ENCODE measurements at regions of chr15 and their contacts with region 1.

Region 1: GRCh38 chr15:67065444-67066093 is at the start of gene SMAD3:
- DNase-seq: peak; percentile 91 to 92
- ATAC-seq: peak; percentile 86 to 92 (median 90)
- H3K4me3 ChIP-seq: peak within 1 kb of the TSS; percentile 73 to 96 (median 82)
- H3K27ac ChIP-seq: peak within 1 kb of the TSS; percentile 82 to 97 (median 93)
- H3K4me1 ChIP-seq: peaks cover 2 to 50% (median 38%) of the 10 kb centered on the region in 9 donors
- H3K27me3 ChIP-seq: no peaks in the 10 kb centered on the region
- CTCF ChIP-seq: peak in 1 of 9 donors; percentile 19
- total RNA-seq, gene SMAD3: 11.3 to 44.8 (median 15.7) TPM

Region 2: GRCh38 chr15:67025719-67026609 is 39.6 kb before region 1 on chr15:
- intact Hi-C with region 1: loop called in 3 of 10 experiments (anchors 5 kb)
- DNase-seq: peak; percentile 27 to 40
- ATAC-seq: peak in 7 of 8 donors; percentile 22 to 57 (median 46)
- H3K4me3 ChIP-seq: no peak overlapping the region
- H3K27ac ChIP-seq: peak overlapping the region in 9 of 10 donors; percentile 43 to 87 (median 69)
- H3K4me1 ChIP-seq: peaks cover 13 to 70% (median 45%) of the 10 kb centered on the region in 9 donors
- H3K27me3 ChIP-seq: no peaks in the 10 kb centered on the region
- CTCF ChIP-seq: no peak

Region 3: GRCh38 chr15:67109141-67110034 is 43.8 kb after region 1 on chr15:
- intact Hi-C with region 1: loop called in 3 of 10 experiments (anchors 5 kb)
- DNase-seq: peak; percentile 57 to 72
- ATAC-seq: peak; percentile 24 to 79 (median 52)
- H3K4me3 ChIP-seq: no peak overlapping the region
- H3K27ac ChIP-seq: peak overlapping the region in 8 of 10 donors; percentile 9 to 57 (median 32)
- H3K4me1 ChIP-seq: peaks cover 25 to 87% (median 59%) of the 10 kb centered on the region in 9 donors
- H3K27me3 ChIP-seq: no peaks in the 10 kb centered on the region
- CTCF ChIP-seq: no peak

Region 4: GRCh38 chr15:67127965-67128364 is 62.4 kb after region 1 on chr15:
- intact Hi-C with region 1: no loop called
- DNase-seq: no peak
- ATAC-seq: peak in 2 of 8 donors; percentile 12 to 53
- H3K4me3 ChIP-seq: no peak overlapping the region
- H3K27ac ChIP-seq: peak overlapping the region in 6 of 10 donors; percentile 4 to 85 (median 52)
- H3K4me1 ChIP-seq: peaks cover 17 to 88% (median 66%) of the 10 kb centered on the region in 9 donors
- H3K27me3 ChIP-seq: no peaks in the 10 kb centered on the region
- CTCF ChIP-seq: no peak

Region 5: DNA sequence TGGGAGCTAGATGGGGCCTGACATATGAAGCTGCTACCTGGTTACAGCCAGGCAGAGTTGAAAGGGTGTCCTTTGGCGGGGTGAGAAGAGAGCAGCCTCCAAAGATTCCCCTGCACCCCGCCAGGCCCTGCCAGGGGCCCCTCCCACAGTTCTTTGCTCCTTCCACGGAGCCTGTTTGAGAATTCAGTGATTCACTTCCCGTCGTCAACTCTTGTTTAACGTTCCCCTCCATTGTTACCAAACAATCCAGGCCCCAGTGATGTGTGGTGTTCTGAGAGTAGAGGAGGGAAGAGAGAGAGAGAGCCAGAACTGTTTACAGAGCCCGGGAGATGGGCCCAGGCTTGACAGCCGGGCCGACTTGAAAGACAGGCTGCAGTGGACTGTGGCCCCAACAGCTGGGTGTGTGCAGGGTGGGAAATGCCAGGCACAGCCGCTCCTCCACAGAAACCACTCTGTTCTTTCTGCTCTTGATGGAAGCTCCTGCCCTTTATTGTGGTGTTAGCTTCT is 81.4 kb after region 1 on chr15:
- intact Hi-C with region 1: loop called in 1 of 10 experiments (anchors 5 kb)
- DNase-seq: peak in 1 of 2 donors; percentile 62
- ATAC-seq: peak; percentile 35 to 76 (median 64)
- H3K4me3 ChIP-seq: no peak overlapping the region
- H3K27ac ChIP-seq: peak overlapping the region; percentile 14 to 87 (median 74)
- H3K4me1 ChIP-seq: peaks cover 20 to 98% (median 69%) of the 10 kb centered on the region in 9 donors
- H3K27me3 ChIP-seq: no peaks in the 10 kb centered on the region
- CTCF ChIP-seq: no peak

Region 6: DNA sequence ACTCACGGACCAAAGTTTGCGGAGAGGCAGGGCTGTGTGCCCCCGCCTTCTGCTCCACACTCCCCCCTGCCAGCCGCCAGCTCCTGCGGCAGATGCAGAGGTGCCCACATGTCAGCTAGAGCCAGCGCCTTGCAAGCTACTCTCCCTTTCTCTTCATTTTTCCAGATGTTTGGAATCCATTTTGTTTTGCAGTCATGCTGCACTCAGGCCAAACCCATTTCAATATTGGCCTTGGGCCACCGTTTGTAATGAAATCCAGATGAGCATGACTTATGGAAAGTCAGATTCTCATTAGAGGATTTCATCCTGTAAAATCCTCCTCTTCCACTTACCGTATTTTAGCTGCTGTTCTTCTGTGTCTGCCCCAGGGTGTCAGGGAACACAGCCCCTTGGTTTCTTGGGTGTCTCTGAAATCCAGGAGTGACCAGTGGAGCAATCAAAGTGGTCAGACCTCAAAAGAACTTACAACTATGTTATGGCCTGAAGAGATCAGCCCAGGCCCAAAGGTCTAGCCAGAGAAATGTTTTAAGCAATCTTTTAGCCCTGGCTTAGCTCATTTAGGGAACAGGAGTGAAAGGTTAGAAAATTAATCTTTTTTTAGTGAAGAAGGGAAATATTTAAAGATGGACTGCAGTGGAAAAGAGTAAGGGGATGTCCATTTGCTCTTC is 123.1 kb after region 1 on chr15:
- intact Hi-C with region 1: loop called in 6 of 10 experiments (anchors 5 kb)
- DNase-seq: peak in 1 of 2 donors; percentile 75
- ATAC-seq: peak in 5 of 8 donors; percentile 15 to 37 (median 24)
- H3K4me3 ChIP-seq: no peak overlapping the region
- H3K27ac ChIP-seq: peak overlapping the region; percentile 79 to 95 (median 88)
- H3K4me1 ChIP-seq: peaks cover 35 to 70% (median 66%) of the 10 kb centered on the region in 9 donors
- H3K27me3 ChIP-seq: no peaks in the 10 kb centered on the region
- CTCF ChIP-seq: no peak